ENCODE measurements at regions of chr9 and their contacts with region 1.

Region 1: GRCh38 chr9:104386425-104387069 is 117.5 kb upstream of the OR13F1 start:
- DNase-seq: no peak
- ATAC-seq: peak; percentile 80 to 89 (median 86)
- H3K4me3 ChIP-seq: no peak overlapping the region
- H3K27ac ChIP-seq: no peak overlapping the region
- H3K4me1 ChIP-seq: no peaks in the 10 kb centered on the region
- H3K27me3 ChIP-seq: no peaks in the 10 kb centered on the region
- CTCF ChIP-seq: peak; percentile 70 to 83 (median 77)
- POLR2A ChIP-seq: no peak

Region 2: GRCh38 chr9:104177003-104177611 is 209.4 kb before region 1 on chr9:
- intact Hi-C with region 1: loop called (anchors 5 to 10 kb)
- DNase-seq: no peak
- ATAC-seq: peak; percentile 70 to 76 (median 74)
- H3K4me3 ChIP-seq: no peak overlapping the region
- H3K27ac ChIP-seq: no peak overlapping the region
- H3K4me1 ChIP-seq: no peaks in the 10 kb centered on the region
- H3K27me3 ChIP-seq: no peaks in the 10 kb centered on the region
- CTCF ChIP-seq: peak; percentile 60 to 77 (median 76)
- POLR2A ChIP-seq: no peak